ENCODE measurements at regions of chr16 and their contacts with region 1.

Region 1: DNA sequence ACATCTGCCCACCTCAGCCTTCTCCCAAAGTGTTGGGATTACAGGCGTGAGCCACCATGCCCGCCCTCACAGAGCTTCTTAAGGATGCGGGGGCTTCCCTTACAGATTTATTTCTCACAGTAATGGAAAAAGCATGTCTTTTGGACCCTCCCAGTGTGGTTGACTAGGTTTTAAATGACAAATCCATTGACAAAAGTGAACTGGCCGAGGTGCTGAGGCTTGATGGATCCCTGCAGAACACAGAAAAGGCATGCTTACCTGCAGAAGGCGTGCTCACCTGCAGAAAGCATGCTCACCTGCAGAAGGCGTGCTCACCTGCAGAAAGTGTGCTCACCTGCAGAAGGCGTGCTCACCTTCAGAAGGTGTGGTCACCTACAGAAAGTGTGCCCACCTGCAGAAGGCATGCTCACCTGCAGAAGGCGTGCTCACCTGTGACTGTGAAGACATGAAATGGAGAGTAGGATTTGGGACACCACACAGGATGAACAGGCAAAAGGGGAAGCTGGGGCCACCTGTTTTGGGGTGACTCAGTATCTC is 15.1 kb upstream of the BBS2 start:
- DNase-seq: no peak
- ATAC-seq: no peak
- H3K4me3 ChIP-seq: no peak overlapping the region
- H3K27ac ChIP-seq: no peak overlapping the region
- H3K4me1 ChIP-seq: no peaks in the 10 kb centered on the region
- H3K27me3 ChIP-seq: no peaks in the 10 kb centered on the region
- CTCF ChIP-seq: no peak
- POLR2A ChIP-seq: no peak

Region 2: GRCh38 chr16:55933038-55933437 is 601.9 kb before region 1 on chr16:
- in situ Hi-C with region 1: no loop called
- intact Hi-C with region 1: loop called (anchors 5 kb)
- DNase-seq: no peak
- ATAC-seq: no peak
- H3K4me3 ChIP-seq: no peak overlapping the region
- H3K27ac ChIP-seq: no peak overlapping the region
- H3K4me1 ChIP-seq: no peaks in the 10 kb centered on the region
- H3K27me3 ChIP-seq: no peaks in the 10 kb centered on the region
- CTCF ChIP-seq: no peak
- POLR2A ChIP-seq: no peak

Region 3: GRCh38 chr16:56488035-56488434 is 46.9 kb before region 1 on chr16:
- in situ Hi-C with region 1: no loop called
- intact Hi-C with region 1: no loop called
- DNase-seq: no peak
- ATAC-seq: no peak
- H3K4me3 ChIP-seq: no peak overlapping the region
- H3K27ac ChIP-seq: no peak overlapping the region
- H3K4me1 ChIP-seq: peaks cover under 1 to 15% of the 10 kb centered on the region in 2 donors
- H3K27me3 ChIP-seq: no peaks in the 10 kb centered on the region
- CTCF ChIP-seq: no peak
- POLR2A ChIP-seq: no peak